Mucosa of descending colon (tissue), 3 donors: ENCODE measurements at regions of chr17 and their contacts with region 1.

Region 1: GRCh38 chr17:17812211-17813057 is 24.4 kb downstream of the SREBF1 start:
- DNase-seq: peak in 2 of 3 donors; percentile 80 to 84
- ATAC-seq: peak; percentile 64
- H3K4me3 ChIP-seq: no peak overlapping the region
- H3K4me1 ChIP-seq: peaks cover 4% of the 10 kb centered on the region
- CTCF ChIP-seq: peak; percentile 93

Region 2: GRCh38 chr17:17712268-17712924 is 100.0 kb before region 1 on chr17:
- intact Hi-C with region 1: no loop called
- DNase-seq: no peak
- ATAC-seq: no peak
- H3K4me3 ChIP-seq: no peak overlapping the region
- H3K4me1 ChIP-seq: peaks cover 27% of the 10 kb centered on the region
- CTCF ChIP-seq: no peak

Region 3: GRCh38 chr17:17859909-17860765 is 47.7 kb after region 1 on chr17:
- intact Hi-C with region 1: loop called in 1 of 2 experiments (anchors 5 kb)
- DNase-seq: peak; percentile 75 to 78 (median 75)
- ATAC-seq: peak; percentile 95
- H3K4me3 ChIP-seq: no peak overlapping the region
- H3K4me1 ChIP-seq: peaks cover under 1% of the 10 kb centered on the region
- CTCF ChIP-seq: peak; percentile 93